ENCODE measurements at regions of chr3 and their contacts with region 1.

Region 1: GRCh38 chr3:112390783-112391641 is 58.1 kb downstream of the CD200 start:
- DNase-seq: peak in 2 of 5 donors; percentile 33 to 53
- H3K4me3 ChIP-seq: no peak overlapping the region
- H3K27ac ChIP-seq: peak overlapping the region; percentile 14 to 73
- H3K4me1 ChIP-seq: peaks cover 8% of the 10 kb centered on the region
- H3K27me3 ChIP-seq: no peaks in the 10 kb centered on the region
- CTCF ChIP-seq: no peak
- EP300 ChIP-seq: no peak
- POLR2A ChIP-seq: no peak

Region 2: GRCh38 chr3:112333002-112333380 is 58.0 kb before region 1 on chr3 and contains the start of gene CD200:
- intact Hi-C with region 1: loop called in 2 of 4 experiments (anchors 10 kb)
- DNase-seq: peak; percentile 75 to 82 (median 79)
- H3K4me3 ChIP-seq: peak within 1 kb of the TSS; percentile 45
- H3K27ac ChIP-seq: peak within 1 kb of the TSS; percentile 88
- H3K4me1 ChIP-seq: peaks cover 3% of the 10 kb centered on the region
- H3K27me3 ChIP-seq: no peaks in the 10 kb centered on the region
- CTCF ChIP-seq: no peak
- EP300 ChIP-seq: no peak
- POLR2A ChIP-seq: peak; percentile 41
- total RNA-seq, gene CD200: 9.6 to 36.4 (median 11.3) TPM

Region 3: GRCh38 chr3:112446343-112446742 is 55.3 kb after region 1 on chr3:
- intact Hi-C with region 1: no loop called
- DNase-seq: no peak
- H3K4me3 ChIP-seq: no peak overlapping the region
- H3K27ac ChIP-seq: no peak overlapping the region
- H3K4me1 ChIP-seq: no peaks in the 10 kb centered on the region
- H3K27me3 ChIP-seq: no peaks in the 10 kb centered on the region
- CTCF ChIP-seq: no peak
- EP300 ChIP-seq: no peak
- POLR2A ChIP-seq: no peak

Measured in ovary (tissue), 10 donors.